ENCODE measurements at regions of chr6 and their contacts with region 1.

Region 1: DNA sequence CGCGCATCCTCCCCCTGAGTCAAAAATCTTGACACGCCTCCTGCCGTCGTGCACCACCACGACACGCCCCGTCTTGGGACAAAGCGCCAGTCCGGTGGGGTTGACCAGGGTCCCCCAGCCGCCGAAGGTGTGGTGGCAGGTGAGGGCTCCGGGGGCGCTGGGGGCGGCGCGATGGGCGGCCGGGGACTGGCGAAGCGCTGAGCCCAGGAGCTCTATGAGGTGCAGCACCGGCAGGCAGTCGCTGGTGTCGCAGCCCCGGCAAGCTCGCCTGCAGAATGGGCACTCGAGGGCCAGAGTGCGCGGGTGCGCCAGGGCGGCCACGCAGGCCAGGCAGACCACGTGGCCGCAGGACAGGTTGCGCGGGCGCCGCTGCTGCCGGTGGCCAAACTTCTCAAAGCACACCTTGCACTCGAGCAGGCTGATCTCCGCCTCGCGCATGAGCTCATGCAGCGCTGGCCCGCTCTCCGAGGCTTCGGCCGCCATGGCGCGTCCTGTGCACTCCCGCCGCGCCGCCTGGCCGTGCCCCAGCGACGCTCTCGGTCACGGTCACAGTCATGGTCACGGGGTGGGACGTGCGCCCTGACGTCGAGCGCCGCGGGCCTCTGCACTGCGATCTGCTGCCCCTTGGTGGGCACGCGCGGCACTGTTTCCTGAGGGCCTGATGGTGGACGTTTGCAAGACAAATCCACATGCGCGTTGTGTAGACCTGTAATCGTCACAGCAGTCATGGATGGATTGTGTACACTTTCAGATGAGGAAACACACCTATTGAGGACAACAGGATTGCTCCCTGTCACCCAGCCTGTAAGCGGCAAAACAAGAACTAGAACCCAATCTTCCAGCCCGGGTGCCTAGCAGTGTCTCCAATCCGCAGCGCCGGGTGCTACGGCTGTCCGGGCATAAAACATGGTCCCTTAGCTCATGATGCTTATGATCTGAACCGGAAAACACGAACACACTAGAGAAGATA is at the start of gene NHLRC1:
- DNase-seq: peak; percentile 81 to 98 (median 89)

Region 2: DNA sequence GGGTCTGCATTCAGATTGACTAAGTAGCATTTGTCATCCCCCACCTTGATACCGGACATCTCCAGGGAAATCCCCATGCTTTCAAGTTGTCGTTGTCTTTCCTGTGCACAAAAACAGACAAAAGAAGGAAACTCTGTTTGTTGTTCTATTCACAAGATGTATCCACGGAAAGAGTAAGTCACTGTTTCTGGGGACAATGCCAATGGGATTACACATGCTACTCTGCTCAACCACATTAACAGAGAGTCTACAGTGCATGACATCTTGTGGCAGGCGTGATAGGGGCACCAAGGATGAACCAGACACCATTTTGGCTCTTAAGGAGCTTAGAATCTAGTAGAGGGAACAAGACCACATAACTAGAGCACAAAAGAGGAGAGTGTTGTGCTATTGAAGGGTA is 291.3 kb before region 1 on chr6:
- intact Hi-C with region 1: loop called (anchors 5 kb)
- DNase-seq: no peak

Measured in posterior cingulate gyrus (tissue), 11 donors.